Posterior vena cava (tissue), 2 donors: ENCODE measurements at regions of chr5 and their contacts with region 1.

Region 1: DNA sequence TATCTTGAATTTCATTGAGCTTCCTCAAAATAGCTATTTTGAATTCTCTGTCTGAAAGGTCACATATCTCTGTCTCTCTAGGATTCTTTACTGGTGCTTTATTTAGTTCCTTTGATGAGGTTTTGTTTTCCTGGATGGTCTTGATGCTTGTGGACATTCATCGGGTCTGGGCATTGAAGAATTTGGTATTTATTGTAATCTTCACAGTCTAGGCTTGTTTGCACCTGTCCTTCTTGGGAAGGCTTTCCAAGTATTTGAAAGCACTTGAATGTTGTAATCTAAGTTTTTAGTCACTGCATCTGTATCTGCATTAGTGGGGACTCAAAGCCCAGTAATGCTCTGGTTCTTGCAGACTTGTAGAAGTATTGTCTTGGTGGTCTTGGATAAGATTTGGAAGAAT is 47.8 kb downstream of the SMIM15 start:
- DNase-seq: no peak

Region 2: DNA sequence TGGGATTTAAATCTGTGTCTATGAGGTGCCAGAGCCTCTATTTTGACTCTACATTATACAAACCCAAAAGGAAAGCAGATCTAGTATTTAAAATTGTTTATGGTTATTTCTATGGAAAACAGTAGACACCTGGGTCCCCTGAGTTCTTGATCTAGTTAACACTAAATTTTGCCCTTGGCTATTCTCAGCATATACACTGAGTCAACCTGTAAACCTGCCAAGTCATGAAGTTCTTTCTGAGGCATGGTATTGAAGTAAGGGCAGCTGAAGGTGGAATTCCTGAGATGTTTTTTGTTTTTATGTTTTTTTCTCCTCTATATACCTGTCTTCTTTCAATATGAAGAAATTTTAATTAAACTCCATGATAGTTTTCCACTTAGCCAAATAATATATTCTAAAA is 1341.2 kb before region 1 on chr5:
- intact Hi-C with region 1: no loop called
- DNase-seq: no peak

Region 3: GRCh38 chr5:61386045-61386800 is 271.8 kb after region 1 on chr5:
- intact Hi-C with region 1: no loop called
- DNase-seq: no peak

Region 4: DNA sequence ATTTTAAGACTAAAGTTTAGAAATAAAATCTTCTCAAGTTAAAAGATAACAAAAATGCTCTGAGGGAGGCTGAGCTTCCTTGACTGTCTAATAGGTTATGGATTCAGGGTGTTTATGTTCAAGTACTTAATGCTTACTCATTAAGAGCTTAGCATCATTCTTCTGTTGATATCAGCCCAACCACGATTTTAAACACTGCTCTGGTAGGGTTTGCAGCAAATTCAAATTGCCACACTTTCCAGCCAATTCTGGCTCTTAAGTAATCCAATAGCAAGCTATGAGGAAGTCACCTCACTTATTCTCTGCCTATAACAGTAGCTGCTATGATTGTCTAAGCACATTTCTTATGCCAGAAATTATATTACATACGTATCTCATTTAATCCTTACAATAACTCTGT is 1000.6 kb after region 1 on chr5:
- intact Hi-C with region 1: loop called in 1 of 2 experiments (anchors 5 kb)
- DNase-seq: no peak